ENCODE measurements at regions of chr6 and their contacts with region 1.

Region 1: GRCh38 chr6:147648916-147649315 is 140.4 kb downstream of the SAMD5 start:
- DNase-seq: no peak
- H3K4me3 ChIP-seq: no peak overlapping the region
- CTCF ChIP-seq: no peak
- POLR2A ChIP-seq: no peak

Region 2: DNA sequence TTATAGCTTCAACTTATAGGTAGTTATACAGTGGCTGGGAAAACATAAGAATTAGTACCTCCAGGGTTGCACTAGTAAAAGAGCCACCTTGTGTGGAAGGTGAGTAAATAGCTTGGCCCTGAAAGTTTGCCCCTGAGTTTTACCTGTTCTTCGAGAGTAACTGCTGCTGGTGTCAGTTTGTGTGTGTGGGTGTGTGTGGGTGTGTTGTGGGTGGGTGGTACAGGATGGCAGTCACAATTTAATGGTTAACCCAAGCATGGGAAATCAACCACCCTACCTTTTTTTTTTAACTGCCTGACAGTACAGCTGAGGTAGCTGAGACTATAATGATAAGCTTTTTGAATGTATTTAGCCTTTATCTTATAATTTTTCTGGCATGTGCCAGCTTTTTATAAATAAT is 307.4 kb before region 1 on chr6:
- intact Hi-C with region 1: no loop called
- DNase-seq: no peak
- H3K4me3 ChIP-seq: no peak overlapping the region
- CTCF ChIP-seq: no peak
- POLR2A ChIP-seq: no peak

Region 3: DNA sequence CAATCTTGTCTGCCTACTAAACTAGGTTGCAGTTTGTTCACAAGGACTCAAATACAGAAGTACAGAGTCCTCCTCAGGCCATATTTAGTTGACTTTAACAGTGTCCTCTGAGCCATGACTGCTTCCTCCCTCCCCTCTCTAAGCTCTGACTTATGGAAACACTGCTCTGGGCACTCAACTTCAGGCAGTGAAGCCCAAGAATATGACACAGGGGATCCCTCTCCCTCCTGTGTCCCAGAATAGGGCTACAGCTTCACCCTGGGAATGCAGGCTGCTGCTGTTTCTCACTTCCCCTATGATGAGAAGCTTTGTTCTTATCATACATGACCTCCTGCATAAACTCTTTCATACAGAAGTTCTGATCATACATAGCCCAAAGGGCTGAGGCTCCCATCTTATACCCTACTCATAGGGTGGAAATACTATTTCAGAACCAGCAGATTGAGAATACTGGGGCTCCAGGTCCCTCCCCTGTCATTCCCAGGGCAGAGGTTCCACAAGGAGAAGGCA is 1000.6 kb after region 1 on chr6:
- intact Hi-C with region 1: loop called (anchors 5 kb)
- DNase-seq: no peak
- H3K4me3 ChIP-seq: no peak overlapping the region
- CTCF ChIP-seq: no peak
- POLR2A ChIP-seq: no peak

Measured in lower leg skin (tissue), 4 donors.